ENCODE measurements at regions of chr2 and their contacts with region 1.

Region 1: GRCh38 chr2:234500394-234501006 is 3.6 kb upstream of the ARL4C start:
- DNase-seq: peak; percentile 84
- H3K4me3 Mint-ChIP-seq: no peak overlapping the region
- H3K27ac Mint-ChIP-seq: peak overlapping the region; percentile 15
- H3K4me1 Mint-ChIP-seq: peaks cover 26% of the 10 kb centered on the region
- H3K27me3 Mint-ChIP-seq: no peaks in the 10 kb centered on the region

Region 2: DNA sequence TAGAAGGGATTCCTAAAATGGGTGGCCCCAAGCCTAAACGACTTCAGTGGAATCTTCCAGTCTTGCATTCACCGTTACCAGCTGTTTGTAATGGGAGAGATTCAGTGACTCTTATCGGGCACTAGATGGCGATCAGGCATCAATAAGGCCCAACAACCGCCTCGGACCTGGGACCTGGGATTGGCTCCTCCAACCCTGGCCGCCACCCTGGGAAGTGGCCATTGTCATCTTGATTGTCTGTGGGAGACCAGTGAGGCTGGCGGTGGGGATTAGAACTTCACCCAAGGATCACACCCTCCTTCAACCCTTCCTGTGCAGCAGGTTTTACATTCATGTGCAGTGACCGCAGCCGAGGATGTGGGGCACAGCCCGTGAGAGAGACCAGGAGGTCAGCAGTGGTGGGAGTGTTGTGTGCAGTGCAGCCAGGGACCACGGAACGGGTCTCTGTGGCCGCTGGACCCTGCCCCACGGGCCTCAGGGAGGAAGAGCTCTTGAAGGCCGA is 364.7 kb before region 1 on chr2:
- CTCF ChIA-PET with region 1: interaction called, 89 read pairs
- POLR2A ChIA-PET with region 1: interaction called, 3 read pairs
- intact Hi-C with region 1: loop called (anchors 1 kb)
- DNase-seq: peak; percentile 70
- H3K4me3 Mint-ChIP-seq: no peak overlapping the region
- H3K27ac Mint-ChIP-seq: no peak overlapping the region
- H3K4me1 Mint-ChIP-seq: peaks cover 22% of the 10 kb centered on the region
- H3K27me3 Mint-ChIP-seq: no peaks in the 10 kb centered on the region

Region 3: DNA sequence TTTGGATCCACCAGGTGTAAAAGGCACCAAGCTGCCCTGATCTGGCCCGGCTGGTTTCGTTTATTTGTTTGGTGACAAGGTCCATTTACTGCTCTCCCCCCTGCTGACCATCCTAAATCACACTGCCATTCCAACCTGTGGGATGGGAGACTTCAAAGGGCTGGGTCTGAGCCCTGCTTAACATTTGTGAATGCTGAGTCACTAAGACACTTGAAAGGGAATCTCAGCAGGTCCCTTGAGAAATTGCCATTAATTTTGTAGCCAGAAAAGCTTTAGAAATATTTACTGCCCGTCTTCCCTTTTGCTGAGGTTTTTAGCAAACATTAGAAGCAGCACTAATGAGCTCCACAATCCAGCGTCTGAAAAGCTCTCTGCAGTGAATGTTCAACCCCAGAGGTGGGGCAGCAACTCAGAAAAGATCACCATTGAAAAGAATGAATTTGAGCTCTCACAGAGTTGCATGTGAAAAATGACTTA is 137.5 kb before region 1 on chr2:
- CTCF ChIA-PET with region 1: no interaction called
- POLR2A ChIA-PET with region 1: no interaction called
- intact Hi-C with region 1: no loop called
- DNase-seq: no peak
- H3K4me3 Mint-ChIP-seq: no peak overlapping the region
- H3K27ac Mint-ChIP-seq: no peak overlapping the region
- H3K4me1 Mint-ChIP-seq: peaks cover 17% of the 10 kb centered on the region
- H3K27me3 Mint-ChIP-seq: no peaks in the 10 kb centered on the region

Region 4: DNA sequence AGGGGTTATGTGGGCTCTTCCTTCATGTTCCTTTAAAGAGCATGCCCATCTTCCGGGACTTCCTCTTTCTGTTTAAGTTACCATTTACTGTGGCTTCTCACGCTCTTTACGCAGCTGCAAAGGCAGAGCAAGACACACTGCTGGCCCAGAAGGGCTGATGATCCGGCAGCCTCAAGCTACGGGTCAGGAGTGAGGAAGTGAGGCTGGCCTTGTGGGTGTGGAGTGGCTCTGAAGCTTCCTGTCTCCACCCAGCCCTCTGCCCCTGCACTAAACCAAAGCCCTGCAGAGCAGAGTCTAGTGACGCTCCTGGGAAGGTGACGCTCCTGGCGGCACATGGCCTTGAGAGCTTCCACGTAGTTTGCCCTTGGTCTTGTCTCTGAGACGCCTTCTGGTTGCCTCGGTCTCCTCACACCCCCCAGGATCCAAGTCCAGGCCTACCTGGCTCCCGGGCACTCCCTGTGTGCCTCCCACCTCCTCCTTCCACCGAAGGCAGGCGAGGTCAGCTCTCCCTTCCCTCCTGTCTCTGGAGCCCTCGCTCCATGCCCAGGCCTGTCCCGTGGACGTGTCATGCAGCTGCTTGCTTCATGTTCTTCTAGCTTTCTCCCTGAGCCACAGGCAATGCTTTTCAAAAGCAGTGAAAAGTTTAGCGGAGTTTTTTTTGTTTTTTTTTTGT is 54.0 kb before region 1 on chr2:
- CTCF ChIA-PET with region 1: interaction called, 6 read pairs
- POLR2A ChIA-PET with region 1: interaction called, 17 read pairs
- intact Hi-C with region 1: no loop called
- DNase-seq: peak; percentile 89
- H3K4me3 Mint-ChIP-seq: peak overlapping the region; percentile 66
- H3K27ac Mint-ChIP-seq: peak overlapping the region; percentile 95
- H3K4me1 Mint-ChIP-seq: peaks cover 73% of the 10 kb centered on the region
- H3K27me3 Mint-ChIP-seq: no peaks in the 10 kb centered on the region

Region 5: GRCh38 chr2:234463626-234464290 is 36.7 kb before region 1 on chr2:
- CTCF ChIA-PET with region 1: interaction called, 9 read pairs
- POLR2A ChIA-PET with region 1: interaction called, 10 read pairs
- intact Hi-C with region 1: no loop called
- DNase-seq: peak; percentile 85
- H3K4me3 Mint-ChIP-seq: peak overlapping the region; percentile 71
- H3K27ac Mint-ChIP-seq: peak overlapping the region; percentile 91
- H3K4me1 Mint-ChIP-seq: peaks cover 68% of the 10 kb centered on the region
- H3K27me3 Mint-ChIP-seq: no peaks in the 10 kb centered on the region

Region 6: DNA sequence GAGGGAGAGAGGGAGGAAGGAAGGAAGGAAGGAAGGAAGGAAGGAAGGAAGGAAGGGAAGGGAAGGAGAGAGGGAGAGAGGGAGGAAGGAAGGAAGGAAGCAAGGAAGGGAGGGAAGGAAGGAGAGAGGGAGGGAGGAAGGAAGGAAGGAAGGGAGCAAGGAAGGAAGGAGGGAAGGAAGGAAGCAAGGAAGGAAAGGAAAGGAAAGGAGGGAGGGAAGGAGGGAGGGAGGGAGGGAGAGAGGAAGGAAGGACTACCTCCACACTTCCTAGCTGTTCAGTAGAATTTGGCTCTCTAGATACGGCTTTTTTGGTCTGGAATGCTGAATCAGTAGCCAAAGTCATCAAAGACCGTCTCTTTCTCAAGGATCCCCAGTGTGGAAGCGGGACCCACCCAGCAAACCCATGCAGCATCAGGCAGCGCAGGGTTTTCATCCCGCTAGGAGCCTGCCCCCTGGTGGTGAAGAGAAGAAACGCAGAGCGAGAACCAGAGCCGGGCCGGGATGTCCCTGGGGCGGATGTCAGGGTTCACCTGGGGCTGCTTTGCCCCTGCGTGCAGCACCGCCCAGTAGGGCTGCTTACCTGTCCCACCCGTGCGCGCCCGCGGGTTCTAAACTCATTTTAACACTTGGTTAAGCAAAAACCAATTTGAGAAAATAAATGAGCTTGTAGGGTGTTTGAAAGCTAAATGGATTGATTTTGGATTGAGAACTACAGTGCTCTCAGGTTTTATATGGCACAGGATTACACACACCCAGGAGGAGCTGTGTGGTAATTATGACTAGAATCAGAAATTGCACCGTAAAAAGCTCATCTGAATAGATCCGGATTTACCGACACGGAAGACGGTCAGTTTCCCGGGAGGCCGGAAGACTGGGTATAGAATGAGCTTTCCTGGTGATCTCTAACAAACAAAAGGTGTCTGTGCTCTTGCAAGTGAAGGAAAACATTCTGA is 44.4 kb after region 1 on chr2:
- CTCF ChIA-PET with region 1: interaction called, 14 read pairs
- POLR2A ChIA-PET with region 1: no interaction called
- intact Hi-C with region 1: loop called (anchors 2 kb)
- DNase-seq: peak; percentile 85
- H3K4me3 Mint-ChIP-seq: no peak overlapping the region
- H3K27ac Mint-ChIP-seq: no peak overlapping the region
- H3K4me1 Mint-ChIP-seq: no peaks in the 10 kb centered on the region
- H3K27me3 Mint-ChIP-seq: peaks cover 4% of the 10 kb centered on the region

Region 7: DNA sequence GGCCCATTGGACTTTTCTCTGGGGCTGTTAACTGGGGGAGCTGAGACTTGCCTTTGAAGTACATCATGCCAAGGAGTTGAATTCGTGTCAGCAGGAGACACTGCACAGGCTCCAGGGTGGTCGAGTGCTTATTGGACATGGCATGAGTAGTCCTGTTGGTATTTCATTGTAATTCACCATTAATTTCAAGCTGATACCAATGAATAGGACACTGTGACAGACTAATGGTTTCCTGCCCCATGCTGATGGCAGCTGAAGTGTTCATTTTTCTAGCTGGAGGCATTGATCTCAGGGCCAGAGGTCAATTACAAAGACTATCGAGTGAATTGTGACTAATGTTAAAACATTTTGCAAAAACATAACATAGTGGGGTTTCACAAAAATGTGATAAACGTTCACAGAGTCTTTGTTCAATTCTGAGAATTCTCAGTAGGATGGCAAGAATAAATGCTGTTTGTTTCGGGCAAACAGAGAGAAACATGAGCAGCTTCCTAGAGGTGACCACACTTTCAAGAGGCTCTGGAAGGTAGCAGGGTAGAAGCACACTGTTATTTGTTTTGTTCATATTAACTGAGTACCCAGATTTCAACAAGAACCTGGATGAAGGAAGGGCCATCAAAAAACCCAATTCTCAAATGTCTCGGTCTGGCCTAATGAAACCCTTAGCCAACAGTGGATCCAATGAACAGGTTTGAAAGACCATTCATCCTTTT is 87.0 kb after region 1 on chr2:
- CTCF ChIA-PET with region 1: no interaction called
- POLR2A ChIA-PET with region 1: no interaction called
- intact Hi-C with region 1: no loop called
- DNase-seq: no peak
- H3K4me3 Mint-ChIP-seq: no peak overlapping the region
- H3K27ac Mint-ChIP-seq: no peak overlapping the region
- H3K4me1 Mint-ChIP-seq: no peaks in the 10 kb centered on the region
- H3K27me3 Mint-ChIP-seq: peaks cover 14% of the 10 kb centered on the region